Right lobe of liver (tissue), 6 donors: ENCODE measurements at regions of chr1 and their contacts with region 1.

Region 1: DNA sequence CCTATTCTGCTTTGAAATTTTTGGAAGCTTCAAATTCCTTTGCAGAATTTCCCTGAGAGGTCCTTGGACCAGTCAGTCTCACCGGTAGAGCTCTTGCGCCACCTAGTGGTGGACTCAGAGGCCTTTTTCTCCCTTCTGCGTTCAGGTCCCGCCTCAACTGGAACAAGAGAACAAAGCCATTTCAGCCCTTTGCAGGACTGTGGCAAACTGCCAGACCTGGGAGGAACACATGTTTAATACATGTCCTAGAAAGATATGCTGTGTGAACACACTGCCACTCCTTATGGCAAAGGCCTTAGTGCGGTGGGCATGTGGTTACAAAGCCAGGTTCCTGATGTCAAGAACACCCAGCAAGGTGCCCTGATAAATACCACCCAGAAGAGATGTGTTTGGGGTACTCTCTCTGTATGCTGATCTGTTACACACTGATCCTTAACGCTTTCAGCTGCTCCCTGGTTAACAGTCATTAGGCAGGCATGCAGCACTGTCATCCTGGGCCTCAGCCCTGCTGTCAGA is 82.2 kb upstream of the SSX2IP start:
- DNase-seq: peak; percentile 64 to 77 (median 70)
- ATAC-seq: peak; percentile 89 to 97 (median 95)
- H3K4me3 ChIP-seq: no peak overlapping the region
- H3K27ac ChIP-seq: no peak overlapping the region
- H3K4me1 ChIP-seq: no peaks in the 10 kb centered on the region
- H3K27me3 ChIP-seq: no peaks in the 10 kb centered on the region
- CTCF ChIP-seq: peak; percentile 85 to 95 (median 94)
- POLR2A ChIP-seq: no peak

Region 2: GRCh38 chr1:84698151-84699110 is 74.1 kb before region 1 on chr1:
- intact Hi-C with region 1: no loop called
- DNase-seq: no peak
- ATAC-seq: peak in 2 of 4 donors; percentile 13 to 83
- H3K4me3 ChIP-seq: no peak overlapping the region
- H3K27ac ChIP-seq: no peak overlapping the region
- H3K4me1 ChIP-seq: peaks cover 0 to 3% (median 0%) of the 10 kb centered on the region in 4 donors
- H3K27me3 ChIP-seq: no peaks in the 10 kb centered on the region
- CTCF ChIP-seq: no peak
- POLR2A ChIP-seq: no peak

Region 3: DNA sequence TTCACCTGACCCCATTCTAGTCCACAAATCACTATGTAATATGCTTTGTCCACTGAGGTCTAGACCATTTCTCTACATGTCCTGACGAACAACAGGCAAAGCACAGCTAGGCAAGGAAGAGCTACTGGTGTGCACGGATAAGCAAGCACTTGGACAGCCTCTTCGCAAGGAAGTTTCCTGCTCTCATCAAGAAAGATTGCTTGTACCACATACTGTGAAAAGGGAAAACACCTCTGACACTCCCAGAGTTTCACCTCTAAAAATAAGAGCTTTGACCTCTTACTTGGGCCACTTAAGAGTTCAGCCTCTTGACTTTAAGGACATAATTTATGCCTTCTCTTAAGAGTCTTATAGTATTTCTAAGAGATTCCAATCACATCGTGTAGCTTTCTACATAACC is 156.5 kb after region 1 on chr1:
- intact Hi-C with region 1: loop called (anchors 10 kb)
- DNase-seq: no peak
- ATAC-seq: no peak
- H3K4me3 ChIP-seq: no peak overlapping the region
- H3K27ac ChIP-seq: no peak overlapping the region
- H3K4me1 ChIP-seq: no peaks in the 10 kb centered on the region
- H3K27me3 ChIP-seq: no peaks in the 10 kb centered on the region
- CTCF ChIP-seq: no peak
- POLR2A ChIP-seq: no peak

Region 4: DNA sequence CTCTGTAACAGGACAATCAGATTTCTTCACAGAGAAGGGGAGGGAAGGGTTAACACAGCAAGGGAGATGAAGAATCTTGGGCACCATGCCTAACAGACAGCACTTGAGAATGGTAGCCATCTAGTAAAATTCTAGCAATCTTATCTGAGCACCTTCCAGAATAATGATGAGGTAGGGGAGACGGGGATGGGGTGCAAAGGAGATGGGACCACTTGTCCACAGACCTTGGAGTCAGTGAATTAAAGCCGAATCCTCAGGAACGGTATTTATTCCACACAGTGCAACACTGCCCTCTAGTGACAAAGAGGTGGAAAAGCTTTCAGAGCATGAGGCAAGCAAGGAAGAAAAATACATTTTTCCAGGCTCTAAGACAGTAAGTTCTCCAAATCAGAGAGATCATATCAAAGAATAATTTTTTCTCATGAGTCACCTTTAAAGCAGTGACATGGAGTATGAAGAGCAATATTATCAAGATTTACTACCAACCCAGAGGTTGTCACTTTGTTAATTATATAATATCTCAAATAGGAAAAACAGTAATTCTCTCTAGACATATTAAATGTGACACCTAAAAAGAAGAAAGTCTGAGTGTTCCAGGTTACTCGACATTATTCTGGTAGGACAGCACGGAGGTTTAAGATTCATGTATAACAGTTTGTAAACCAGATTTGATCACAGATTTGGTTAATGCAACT is 163.8 kb after region 1 on chr1:
- intact Hi-C with region 1: loop called in 1 of 2 experiments (anchors 10 kb)
- DNase-seq: peak in 1 of 3 donors; percentile 50
- ATAC-seq: peak; percentile 93 to 95 (median 94)
- H3K4me3 ChIP-seq: no peak overlapping the region
- H3K27ac ChIP-seq: no peak overlapping the region
- H3K4me1 ChIP-seq: no peaks in the 10 kb centered on the region
- H3K27me3 ChIP-seq: no peaks in the 10 kb centered on the region
- CTCF ChIP-seq: peak; percentile 91 to 96 (median 94)
- POLR2A ChIP-seq: no peak

Region 5: GRCh38 chr1:84973498-84974334 is 201.2 kb after region 1 on chr1:
- intact Hi-C with region 1: no loop called
- DNase-seq: no peak
- ATAC-seq: no peak
- H3K4me3 ChIP-seq: no peak overlapping the region
- H3K27ac ChIP-seq: no peak overlapping the region
- H3K4me1 ChIP-seq: no peaks in the 10 kb centered on the region
- H3K27me3 ChIP-seq: no peaks in the 10 kb centered on the region
- CTCF ChIP-seq: no peak
- POLR2A ChIP-seq: no peak